CD8-positive, alpha-beta T cell (primary cell): ENCODE measurements at regions of chr10 and their contacts with region 1.

Region 1: DNA sequence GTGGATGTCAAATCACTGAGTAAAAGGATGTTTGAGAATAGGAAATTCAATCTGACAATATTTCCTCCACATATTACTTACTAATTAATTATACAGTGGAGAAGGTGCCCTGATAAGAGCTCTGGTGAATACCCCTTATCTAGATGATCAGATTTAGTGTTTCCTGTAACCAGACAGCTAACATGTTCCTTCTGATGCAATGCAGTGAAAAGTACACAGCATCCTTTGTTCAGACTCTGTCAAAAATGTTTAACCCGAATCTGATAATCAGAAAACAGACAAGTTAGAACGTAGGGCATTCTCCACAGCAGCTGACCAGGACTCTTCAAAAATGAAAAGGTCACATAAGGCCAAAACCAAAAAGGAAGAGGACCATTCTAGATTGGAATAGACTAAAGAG is 46.2 kb downstream of the WDR11 start:
- DNase-seq: no peak
- ATAC-seq: no peak
- H3K4me3 ChIP-seq: no peak overlapping the region
- H3K4me3 Mint-ChIP-seq: no peak overlapping the region
- H3K27ac ChIP-seq: no peak overlapping the region
- H3K27ac Mint-ChIP-seq: no peak overlapping the region
- H3K4me1 ChIP-seq: no peaks in the 10 kb centered on the region
- H3K4me1 Mint-ChIP-seq: no peaks in the 10 kb centered on the region
- H3K27me3 ChIP-seq: no peaks in the 10 kb centered on the region
- H3K27me3 Mint-ChIP-seq: no peaks in the 10 kb centered on the region
- CTCF ChIP-seq: no peak

Region 2: DNA sequence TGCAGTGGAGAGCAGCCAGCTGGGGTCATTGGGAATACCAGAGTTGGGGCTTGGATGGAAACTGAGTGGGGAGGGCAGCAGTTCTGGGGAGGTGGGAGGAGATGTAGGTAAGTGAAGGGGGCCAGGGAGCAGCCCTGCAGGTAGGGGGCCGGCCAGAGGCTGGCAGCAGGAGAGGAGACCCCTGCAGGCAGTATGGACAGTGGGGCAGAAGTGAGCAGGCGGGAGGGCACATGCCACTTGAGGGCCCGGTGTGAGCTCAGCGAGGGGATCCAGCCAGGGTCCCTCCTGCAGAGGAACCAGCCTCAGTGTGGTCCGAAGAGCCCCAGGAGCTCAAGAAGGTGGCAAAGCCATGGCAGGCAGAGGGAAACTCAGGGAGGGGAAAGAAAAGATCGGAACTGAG is 29.3 kb after region 1 on chr10:
- CTCF ChIA-PET with region 1: no interaction called
- POLR2A ChIA-PET with region 1: no interaction called
- intact Hi-C with region 1: loop called in 1 of 2 experiments (anchors 2 kb)
- DNase-seq: no peak
- ATAC-seq: no peak
- H3K4me3 ChIP-seq: no peak overlapping the region
- H3K4me3 Mint-ChIP-seq: no peak overlapping the region
- H3K27ac ChIP-seq: no peak overlapping the region
- H3K27ac Mint-ChIP-seq: no peak overlapping the region
- H3K4me1 ChIP-seq: no peaks in the 10 kb centered on the region
- H3K4me1 Mint-ChIP-seq: no peaks in the 10 kb centered on the region
- H3K27me3 ChIP-seq: no peaks in the 10 kb centered on the region
- H3K27me3 Mint-ChIP-seq: peaks cover 3% of the 10 kb centered on the region
- CTCF ChIP-seq: no peak

Region 3: GRCh38 chr10:121490871-121491519 is 593.7 kb after region 1 on chr10:
- CTCF ChIA-PET with region 1: no interaction called
- POLR2A ChIA-PET with region 1: no interaction called
- intact Hi-C with region 1: no loop called
- DNase-seq: no peak
- ATAC-seq: no peak
- H3K4me3 ChIP-seq: no peak overlapping the region
- H3K4me3 Mint-ChIP-seq: no peak overlapping the region
- H3K27ac ChIP-seq: no peak overlapping the region
- H3K27ac Mint-ChIP-seq: no peak overlapping the region
- H3K4me1 ChIP-seq: no peaks in the 10 kb centered on the region
- H3K4me1 Mint-ChIP-seq: no peaks in the 10 kb centered on the region
- H3K27me3 ChIP-seq: no peaks in the 10 kb centered on the region
- H3K27me3 Mint-ChIP-seq: peaks cover 12% of the 10 kb centered on the region
- CTCF ChIP-seq: no peak